ENCODE measurements at regions of chrX and their contacts with region 1.

Region 1: GRCh38 chrX:112874175-112874574 is 33.5 kb upstream of the AMOT start:
- DNase-seq: no peak
- H3K4me3 ChIP-seq: no peak overlapping the region
- H3K4me3 Mint-ChIP-seq: no peak overlapping the region
- H3K27ac Mint-ChIP-seq: no peak overlapping the region
- H3K4me1 ChIP-seq: 0 out of 2 replicates have a peak, but pooled peaks cover 5% of the 10 kb centered on the region
- H3K4me1 Mint-ChIP-seq: no peaks in the 10 kb centered on the region
- H3K27me3 ChIP-seq: no peaks in the 10 kb centered on the region
- H3K27me3 Mint-ChIP-seq: no peaks in the 10 kb centered on the region
- CTCF ChIP-seq: peak in 1 of 2 experiments; percentile 7

Region 2: DNA sequence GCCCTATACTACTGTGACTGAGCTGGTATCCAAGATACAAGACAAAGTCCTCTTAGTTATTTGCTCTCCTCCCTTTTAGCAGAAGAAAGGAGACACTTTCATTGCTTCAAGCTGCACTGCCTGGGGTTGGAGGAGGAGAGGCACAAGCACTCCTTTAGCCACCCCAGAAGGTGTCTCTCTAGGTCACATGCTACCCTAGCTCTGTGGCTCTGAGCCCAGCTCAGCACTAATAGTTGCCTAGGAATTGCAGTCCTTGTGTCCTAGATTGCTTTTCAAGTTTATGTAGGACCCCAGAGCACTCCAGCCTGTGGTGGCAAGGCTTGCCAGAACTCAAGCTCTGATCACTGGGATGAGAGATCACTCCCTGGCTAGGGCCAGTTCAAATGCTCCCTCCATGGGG is 170.0 kb before region 1 on chrX:
- CTCF ChIA-PET with region 1: no interaction called
- POLR2A ChIA-PET with region 1: no interaction called
- intact Hi-C with region 1: no loop called
- DNase-seq: no peak
- H3K4me3 ChIP-seq: no peak overlapping the region
- H3K4me3 Mint-ChIP-seq: no peak overlapping the region
- H3K27ac Mint-ChIP-seq: no peak overlapping the region
- H3K4me1 ChIP-seq: no peaks in the 10 kb centered on the region
- H3K4me1 Mint-ChIP-seq: no peaks in the 10 kb centered on the region
- H3K27me3 ChIP-seq: no peaks in the 10 kb centered on the region
- H3K27me3 Mint-ChIP-seq: no peaks in the 10 kb centered on the region
- CTCF ChIP-seq: no peak

Region 3: DNA sequence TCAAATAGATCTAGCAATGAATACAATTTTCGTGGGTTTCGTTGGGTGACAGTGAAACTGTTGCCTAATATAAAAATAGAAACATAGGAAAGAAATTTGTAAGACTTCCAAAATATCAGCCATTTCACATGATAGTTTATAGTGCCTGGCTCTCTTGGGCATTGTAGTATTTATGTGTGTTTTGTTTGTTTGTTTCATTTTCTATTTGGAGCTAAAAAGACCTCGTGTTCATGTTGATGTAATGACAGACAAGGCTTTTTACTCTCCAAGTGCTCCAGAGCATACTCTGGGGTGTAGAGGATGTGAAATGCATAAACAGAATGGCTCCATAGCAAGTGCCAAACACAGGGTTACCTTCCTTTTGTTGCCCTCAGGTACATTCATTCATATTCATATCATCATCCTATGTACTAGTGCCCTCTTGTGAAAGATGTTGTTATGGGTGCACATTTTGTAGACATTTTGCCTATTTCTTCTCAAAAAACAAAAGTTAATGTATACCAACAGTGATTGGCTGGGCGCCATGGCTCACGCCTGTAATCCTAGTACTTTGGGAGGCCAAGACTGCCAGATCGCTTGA is 67.1 kb after region 1 on chrX:
- CTCF ChIA-PET with region 1: no interaction called
- POLR2A ChIA-PET with region 1: no interaction called
- intact Hi-C with region 1: loop called (anchors 2 kb)
- DNase-seq: no peak
- H3K4me3 ChIP-seq: no peak overlapping the region
- H3K4me3 Mint-ChIP-seq: no peak overlapping the region
- H3K27ac Mint-ChIP-seq: no peak overlapping the region
- H3K4me1 ChIP-seq: no peaks in the 10 kb centered on the region
- H3K4me1 Mint-ChIP-seq: no peaks in the 10 kb centered on the region
- H3K27me3 ChIP-seq: no peaks in the 10 kb centered on the region
- H3K27me3 Mint-ChIP-seq: no peaks in the 10 kb centered on the region
- CTCF ChIP-seq: peak in 1 of 2 experiments; percentile 15

Measured in Caco-2 (cell line).